T-cell (primary cell): ENCODE measurements at regions of chr1 and their contacts with region 1.

Region 1: GRCh38 chr1:232248276-232248820 is 381.6 kb downstream of the SIPA1L2 start:
- DNase-seq: no peak
- ATAC-seq: no peak
- H3K4me3 ChIP-seq: no peak overlapping the region
- H3K4me3 Mint-ChIP-seq: no peak overlapping the region
- H3K27ac ChIP-seq: no peak overlapping the region
- H3K27ac Mint-ChIP-seq: no peak overlapping the region
- H3K4me1 ChIP-seq: no peaks in the 10 kb centered on the region
- H3K4me1 Mint-ChIP-seq: peaks cover 0 to 7% (median 2%) of the 10 kb centered on the region in 3 donors
- H3K27me3 ChIP-seq: peaks cover 0 to 3% of the 10 kb centered on the region in 2 experiments
- H3K27me3 Mint-ChIP-seq: peaks cover 28 to 55% of the 10 kb centered on the region in 2 donors

Region 2: DNA sequence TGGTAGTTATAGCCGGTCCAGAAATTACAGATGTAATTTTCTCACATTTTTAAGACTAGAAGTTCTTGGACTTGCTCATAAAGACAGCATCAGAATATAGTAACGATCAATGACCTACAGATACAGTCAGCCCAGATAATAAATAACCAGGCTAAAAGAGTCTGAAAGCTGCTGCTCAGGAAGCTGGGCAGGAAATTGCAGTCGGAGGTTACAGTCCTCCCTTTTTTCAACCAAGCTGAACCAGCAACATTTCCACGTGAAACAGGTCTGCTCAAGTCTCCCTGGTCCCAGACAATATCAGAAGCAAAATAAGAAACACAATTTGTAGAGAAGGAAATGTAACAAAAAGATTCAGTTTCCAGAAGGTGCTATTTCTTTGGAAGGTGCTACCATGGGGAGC is 75.8 kb before region 1 on chr1:
- CTCF ChIA-PET with region 1: no interaction called
- POLR2A ChIA-PET with region 1: interaction called in 1 of 2 experiments, 11 read pairs
- DNase-seq: no peak
- ATAC-seq: no peak
- H3K4me3 ChIP-seq: no peak overlapping the region
- H3K4me3 Mint-ChIP-seq: no peak overlapping the region
- H3K27ac ChIP-seq: no peak overlapping the region
- H3K27ac Mint-ChIP-seq: no peak overlapping the region
- H3K4me1 ChIP-seq: peaks cover 0 to 2% of the 10 kb centered on the region in 2 experiments
- H3K4me1 Mint-ChIP-seq: peaks cover 0 to 7% (median 5%) of the 10 kb centered on the region in 3 donors
- H3K27me3 ChIP-seq: peaks cover 0 to 9% of the 10 kb centered on the region in 2 experiments
- H3K27me3 Mint-ChIP-seq: peaks cover 5 to 18% of the 10 kb centered on the region in 2 donors

Region 3: GRCh38 chr1:232186931-232187330 is 61.4 kb before region 1 on chr1:
- CTCF ChIA-PET with region 1: no interaction called
- POLR2A ChIA-PET with region 1: no interaction called
- DNase-seq: no peak
- ATAC-seq: no peak
- H3K4me3 ChIP-seq: no peak overlapping the region
- H3K4me3 Mint-ChIP-seq: no peak overlapping the region
- H3K27ac ChIP-seq: no peak overlapping the region
- H3K27ac Mint-ChIP-seq: no peak overlapping the region
- H3K4me1 ChIP-seq: no peaks in the 10 kb centered on the region
- H3K4me1 Mint-ChIP-seq: no peaks in the 10 kb centered on the region
- H3K27me3 ChIP-seq: peaks cover 2 to 8% of the 10 kb centered on the region in 2 experiments
- H3K27me3 Mint-ChIP-seq: peaks cover 0 to 12% of the 10 kb centered on the region in 2 donors